Right ventricle myocardium inferior (tissue), 1 donor: ENCODE measurements at regions of chr7 and their contacts with region 1.

Region 1: GRCh38 chr7:120987683-120988590 is 574 bp upstream of the CPED1 start:
- DNase-seq: peak; percentile 94
- ATAC-seq: peak; percentile 93

Region 2: GRCh38 chr7:121041516-121042148 is 53.7 kb after region 1 on chr7:
- intact Hi-C with region 1: loop called (anchors 5 kb)
- DNase-seq: no peak
- ATAC-seq: no peak

Region 3: DNA sequence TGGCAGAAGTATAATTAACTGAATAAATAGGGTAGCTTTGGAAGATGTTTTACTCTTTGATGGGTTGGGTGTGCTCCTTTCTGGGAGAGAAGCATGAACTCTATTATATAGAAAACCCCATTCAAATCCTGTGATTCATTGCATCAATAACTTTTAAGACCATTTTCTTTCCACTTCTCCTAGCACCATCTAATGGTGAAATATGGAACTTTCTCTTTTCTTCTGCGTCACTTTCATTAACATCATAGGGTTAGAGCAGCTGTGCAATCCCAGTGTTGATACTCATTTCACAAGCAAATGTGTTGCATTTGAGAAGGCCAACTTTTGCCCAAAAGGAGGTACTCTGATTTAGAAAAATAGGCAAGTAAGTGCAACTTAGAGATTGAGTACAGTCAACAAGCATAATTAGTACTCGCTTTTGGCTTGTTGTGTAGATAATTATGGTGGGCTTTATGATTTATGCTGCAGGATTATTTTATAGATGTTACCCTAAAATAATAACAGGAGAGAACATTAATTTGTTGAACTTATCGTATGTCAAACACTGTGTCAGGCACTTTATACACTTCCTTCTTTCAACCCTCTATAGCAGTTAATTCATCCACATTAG is 93.5 kb after region 1 on chr7:
- intact Hi-C with region 1: loop called (anchors 1 kb)
- DNase-seq: no peak
- ATAC-seq: peak; percentile 76

Region 4: DNA sequence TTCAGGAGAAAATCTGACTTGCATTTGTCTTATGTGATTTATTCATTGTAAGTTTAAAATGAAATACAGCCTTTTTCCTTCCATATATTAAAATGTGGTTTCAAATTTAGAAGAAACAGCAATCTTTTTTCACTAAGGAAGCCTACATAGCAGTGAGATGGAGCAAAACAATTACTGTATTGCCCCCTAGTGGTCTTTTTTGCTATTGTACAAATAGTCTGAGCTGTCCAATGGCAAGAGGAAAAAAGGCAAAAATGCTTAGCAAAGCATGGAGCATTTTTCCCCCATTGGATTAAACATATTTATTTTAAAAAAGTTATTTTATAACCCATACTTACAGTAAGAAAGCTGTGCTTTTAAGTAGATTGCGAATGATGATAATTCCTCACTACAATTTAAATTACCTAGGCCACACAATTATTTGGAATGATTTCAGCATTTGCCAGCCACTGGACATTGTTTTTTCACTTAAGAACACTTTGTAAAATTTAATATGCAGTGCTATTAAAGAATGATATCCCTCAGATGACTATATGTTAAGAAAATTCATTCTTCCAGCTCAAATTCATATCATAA is 120.1 kb after region 1 on chr7:
- intact Hi-C with region 1: loop called (anchors 1 kb)
- DNase-seq: no peak
- ATAC-seq: peak; percentile 79